Endothelial cell of umbilical vein (primary cell): ENCODE measurements at regions of chr5 and their contacts with region 1.

Region 1: DNA sequence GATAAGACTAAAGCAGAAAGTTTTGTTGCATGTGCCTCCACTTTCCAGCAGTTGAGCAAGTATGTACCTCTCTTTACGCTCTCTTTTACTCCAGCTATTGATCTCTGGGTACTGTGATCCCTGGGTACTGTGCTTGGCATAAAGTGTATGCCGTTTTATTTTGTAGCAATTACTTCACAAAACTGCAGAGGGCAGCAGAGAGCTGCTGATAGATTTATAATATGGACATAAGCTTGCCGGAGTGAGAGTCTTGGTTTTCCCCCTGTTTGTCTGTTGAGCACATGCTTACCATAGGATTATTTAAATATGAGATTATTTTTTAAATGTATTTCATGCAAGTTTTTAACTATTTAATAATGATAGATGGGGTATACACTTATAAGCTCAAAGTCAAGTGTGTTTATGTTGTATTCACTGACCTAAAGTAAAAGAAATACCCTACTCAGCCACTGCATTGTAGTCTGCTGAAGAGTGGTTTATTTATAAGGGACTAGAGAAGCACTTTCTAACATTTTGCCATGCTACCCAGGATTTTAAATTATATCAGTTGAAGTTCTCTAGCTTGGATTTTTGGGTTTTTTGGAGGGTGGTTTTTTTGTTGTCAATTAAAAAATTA is 13.0 kb downstream of the TTC1 start:
- DNase-seq: peak; percentile 78
- H3K4me3 ChIP-seq: no peak overlapping the region
- H3K27ac ChIP-seq: peak overlapping the region; percentile 75
- H3K4me1 ChIP-seq: peaks cover 15% of the 10 kb centered on the region
- H3K27me3 ChIP-seq: no peaks in the 10 kb centered on the region
- CTCF ChIP-seq: peak; percentile 55 to 62
- POLR2A ChIP-seq: no peak

Region 2: DNA sequence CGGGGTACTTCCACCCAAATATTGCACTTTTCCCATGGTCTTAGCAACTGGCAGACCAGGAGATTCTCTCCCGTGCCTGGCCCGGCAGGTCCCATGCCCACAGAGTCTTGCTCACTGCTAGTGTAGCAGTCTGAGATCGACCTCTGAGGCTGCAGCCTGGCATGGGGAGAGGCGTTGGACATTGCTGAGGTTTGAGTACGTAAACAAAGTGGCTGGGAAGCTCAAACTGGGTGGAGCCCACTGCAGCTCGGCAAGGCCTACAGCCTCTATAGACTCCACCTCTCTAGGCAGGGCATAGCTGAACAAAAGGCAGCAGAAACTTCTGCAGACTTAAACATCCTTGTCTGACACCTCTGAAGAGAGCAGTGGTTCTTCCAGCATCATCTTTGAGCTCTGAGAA is 882.1 kb before region 1 on chr5:
- CTCF ChIA-PET with region 1: no interaction called
- POLR2A ChIA-PET with region 1: no interaction called
- dilution Hi-C with region 1: no loop called
- intact Hi-C with region 1: no loop called
- DNase-seq: no peak
- H3K4me3 ChIP-seq: no peak overlapping the region
- H3K27ac ChIP-seq: no peak overlapping the region
- H3K4me1 ChIP-seq: no peaks in the 10 kb centered on the region
- H3K27me3 ChIP-seq: no peaks in the 10 kb centered on the region
- CTCF ChIP-seq: no peak
- POLR2A ChIP-seq: no peak

Region 3: DNA sequence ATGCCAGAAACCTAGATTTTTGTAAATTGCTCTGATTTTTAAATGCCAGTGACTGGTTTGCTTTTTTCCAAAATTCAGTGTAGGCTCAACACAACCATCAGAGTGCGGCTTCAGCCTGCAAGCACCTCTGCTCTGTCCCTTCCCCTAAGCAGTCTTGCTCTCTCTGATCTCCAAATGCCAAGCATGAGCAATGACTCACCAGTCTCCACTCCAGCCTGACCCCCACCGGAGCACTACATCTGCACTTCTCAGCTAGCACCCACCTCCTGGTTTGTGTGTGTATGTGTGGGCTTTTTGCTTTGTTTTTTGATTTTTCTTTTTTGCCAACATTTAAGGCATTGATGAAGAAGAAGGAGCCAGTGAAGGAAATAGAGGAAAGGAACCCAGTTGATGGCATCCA is 167.0 kb before region 1 on chr5:
- CTCF ChIA-PET with region 1: no interaction called
- POLR2A ChIA-PET with region 1: no interaction called
- dilution Hi-C with region 1: no loop called
- intact Hi-C with region 1: no loop called
- DNase-seq: no peak
- H3K4me3 ChIP-seq: no peak overlapping the region
- H3K27ac ChIP-seq: no peak overlapping the region
- H3K4me1 ChIP-seq: no peaks in the 10 kb centered on the region
- H3K27me3 ChIP-seq: no peaks in the 10 kb centered on the region
- CTCF ChIP-seq: no peak
- POLR2A ChIP-seq: no peak

Region 4: GRCh38 chr5:160054831-160055230 is 32.9 kb after region 1 on chr5:
- CTCF ChIA-PET with region 1: interaction called, 21 read pairs
- POLR2A ChIA-PET with region 1: no interaction called
- dilution Hi-C with region 1: no loop called
- intact Hi-C with region 1: no loop called
- DNase-seq: no peak
- H3K4me3 ChIP-seq: no peak overlapping the region
- H3K27ac ChIP-seq: no peak overlapping the region
- H3K4me1 ChIP-seq: no peaks in the 10 kb centered on the region
- H3K27me3 ChIP-seq: no peaks in the 10 kb centered on the region
- CTCF ChIP-seq: no peak
- POLR2A ChIP-seq: no peak

Region 5: DNA sequence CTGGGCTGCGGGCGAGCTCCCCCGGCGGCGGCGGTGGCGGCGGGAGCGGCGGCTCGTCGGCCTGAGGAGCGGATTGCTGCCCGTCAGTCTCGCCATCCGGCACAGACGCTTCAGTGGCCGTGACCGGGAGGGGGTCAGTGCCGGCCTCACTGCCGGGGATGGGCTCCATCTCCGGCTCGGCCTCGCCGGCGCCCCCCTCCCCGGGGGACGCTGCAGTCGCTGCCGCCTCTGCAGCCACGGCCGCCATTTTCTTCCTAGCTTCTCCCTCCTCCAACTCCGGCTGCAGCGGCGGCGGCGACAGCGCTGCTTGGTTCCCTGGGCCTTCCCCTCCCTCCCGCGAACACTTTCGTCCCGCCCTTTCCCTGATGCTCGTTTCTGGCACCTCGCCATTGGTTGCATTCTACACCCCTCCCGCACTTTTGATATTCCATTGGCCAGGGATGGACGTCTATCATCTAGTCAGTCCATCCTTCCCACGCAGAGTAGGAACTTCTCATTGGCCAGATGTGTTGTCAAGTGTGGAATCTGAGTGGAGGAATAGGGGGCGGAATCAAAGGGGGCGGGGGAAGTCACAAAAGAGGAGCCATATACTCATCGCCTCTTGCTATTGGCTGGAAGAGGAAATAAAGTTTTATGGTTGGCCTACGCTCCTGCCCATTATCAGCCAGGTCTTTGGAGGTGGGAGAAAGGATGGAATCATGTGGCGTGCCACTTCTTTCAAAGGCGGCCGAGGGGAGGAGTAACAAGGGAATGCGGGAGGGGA is 97.4 kb after region 1 on chr5 and contains the start of gene PWWP2A:
- CTCF ChIA-PET with region 1: interaction called, 12 read pairs
- POLR2A ChIA-PET with region 1: no interaction called
- dilution Hi-C with region 1: no loop called
- intact Hi-C with region 1: loop called (anchors 1 kb)
- DNase-seq: peak; percentile 100
- H3K4me3 ChIP-seq: peak within 1 kb of the TSS; percentile 71 to 88 (median 73)
- H3K27ac ChIP-seq: peak within 1 kb of the TSS; percentile 56
- H3K4me1 ChIP-seq: peaks cover 6% of the 10 kb centered on the region
- H3K27me3 ChIP-seq: peaks cover 2 to 4% of the 10 kb centered on the region in 2 experiments
- CTCF ChIP-seq: peak; percentile 14 to 21
- POLR2A ChIP-seq: peak; percentile 86
- total RNA-seq, gene PWWP2A: 17.3 and 19.3 TPM in 2 replicates

Region 6: DNA sequence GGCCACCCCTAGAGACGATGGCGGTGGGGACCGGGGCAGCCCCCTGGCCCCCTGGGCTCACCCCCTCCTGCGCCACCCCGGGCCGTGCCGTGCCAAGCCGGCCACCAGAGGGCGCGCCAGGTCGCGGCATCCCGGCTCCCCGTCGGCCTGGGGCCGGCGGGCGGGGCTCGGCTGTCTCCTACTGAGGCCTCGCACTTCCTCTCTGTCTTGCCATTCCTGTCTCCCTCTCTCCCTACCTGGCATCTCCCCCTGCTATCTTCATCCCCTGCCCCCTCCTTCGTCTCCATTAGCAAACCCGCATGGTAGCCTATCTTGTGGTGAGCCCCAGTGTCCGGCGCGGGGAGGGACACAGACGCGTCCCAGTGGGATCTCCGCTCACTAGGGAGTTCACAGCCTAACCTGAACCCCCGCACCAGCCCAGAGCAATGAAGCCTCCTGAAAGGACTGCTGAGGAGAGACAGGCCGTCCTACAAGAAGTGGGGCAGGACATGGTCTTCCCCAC is 177.5 kb after region 1 on chr5:
- CTCF ChIA-PET with region 1: interaction called, 51 read pairs
- POLR2A ChIA-PET with region 1: no interaction called
- dilution Hi-C with region 1: no loop called
- intact Hi-C with region 1: loop called (anchors 1 kb)
- DNase-seq: peak; percentile 42
- H3K4me3 ChIP-seq: peak overlapping the region in 1 of 3 experiments; percentile 35
- H3K27ac ChIP-seq: no peak overlapping the region
- H3K4me1 ChIP-seq: peaks cover 12% of the 10 kb centered on the region
- H3K27me3 ChIP-seq: no peaks in the 10 kb centered on the region
- CTCF ChIP-seq: peak; percentile 85 to 93
- POLR2A ChIP-seq: no peak

Region 7: GRCh38 chr5:160312134-160312959 is 290.4 kb after region 1 on chr5 and contains the start of gene CCNJL:
- CTCF ChIA-PET with region 1: interaction called, 13 read pairs
- POLR2A ChIA-PET with region 1: no interaction called
- dilution Hi-C with region 1: no loop called
- intact Hi-C with region 1: no loop called
- DNase-seq: peak; percentile 78
- H3K4me3 ChIP-seq: peak within 1 kb of the TSS; percentile 23 to 80 (median 76)
- H3K27ac ChIP-seq: peak within 1 kb of the TSS; percentile 29
- H3K4me1 ChIP-seq: peaks cover 28% of the 10 kb centered on the region
- H3K27me3 ChIP-seq: no peaks in the 10 kb centered on the region
- CTCF ChIP-seq: no peak
- POLR2A ChIP-seq: peak; percentile 85
- total RNA-seq, gene CCNJL: 17.4 and 20.0 TPM in 2 replicates

Region 8: GRCh38 chr5:160390787-160391696 is 369.1 kb after region 1 on chr5:
- CTCF ChIA-PET with region 1: interaction called, 254 read pairs
- POLR2A ChIA-PET with region 1: interaction called, 6 read pairs
- dilution Hi-C with region 1: no loop called
- intact Hi-C with region 1: loop called (anchors 1 kb)
- DNase-seq: peak; percentile 30
- H3K4me3 ChIP-seq: no peak overlapping the region
- H3K27ac ChIP-seq: no peak overlapping the region
- H3K4me1 ChIP-seq: no peaks in the 10 kb centered on the region
- H3K27me3 ChIP-seq: no peaks in the 10 kb centered on the region
- CTCF ChIP-seq: peak; percentile 11 to 20
- POLR2A ChIP-seq: no peak